Activated CD4-positive, alpha-beta T cell treated with anti-CD3 and anti-CD28 coated beads for 36 hours (primary cell): ENCODE measurements at regions of chr6 and their contacts with region 1.

Region 1: DNA sequence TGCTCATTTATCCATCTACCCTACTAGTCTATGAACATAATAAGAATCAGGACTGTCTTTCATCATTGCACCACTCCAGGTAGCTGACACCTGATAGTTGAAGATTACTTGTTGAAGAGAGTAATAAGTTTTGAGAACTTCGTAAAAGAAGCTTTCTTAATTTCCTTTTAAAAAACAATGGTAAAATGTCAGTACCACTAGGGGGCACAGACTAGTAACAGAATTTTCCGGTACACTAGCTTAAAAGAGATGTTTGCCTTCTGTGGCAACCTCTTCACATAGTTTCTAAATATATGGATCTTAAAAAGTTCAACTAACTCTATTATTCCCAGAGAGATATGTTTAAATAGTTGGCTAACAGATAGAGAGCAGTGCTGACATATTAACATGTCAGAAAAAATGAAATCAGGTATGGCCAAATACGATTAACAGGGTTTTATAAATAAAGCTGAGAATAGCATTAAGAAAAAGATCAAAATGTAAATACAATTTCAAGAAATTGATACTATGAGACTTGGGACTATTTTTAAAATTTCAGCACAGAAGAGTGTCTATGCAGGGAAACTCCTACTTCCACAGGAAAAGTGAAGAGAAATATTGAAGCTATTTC is 5.4 kb upstream of the KCNQ5 start:
- DNase-seq: no peak
- ATAC-seq: no peak
- H3K4me3 Mint-ChIP-seq: no peak overlapping the region
- H3K27ac Mint-ChIP-seq: no peak overlapping the region
- H3K4me1 Mint-ChIP-seq: peaks cover 46% of the 10 kb centered on the region
- H3K27me3 Mint-ChIP-seq: peaks cover 9% of the 10 kb centered on the region

Region 2: DNA sequence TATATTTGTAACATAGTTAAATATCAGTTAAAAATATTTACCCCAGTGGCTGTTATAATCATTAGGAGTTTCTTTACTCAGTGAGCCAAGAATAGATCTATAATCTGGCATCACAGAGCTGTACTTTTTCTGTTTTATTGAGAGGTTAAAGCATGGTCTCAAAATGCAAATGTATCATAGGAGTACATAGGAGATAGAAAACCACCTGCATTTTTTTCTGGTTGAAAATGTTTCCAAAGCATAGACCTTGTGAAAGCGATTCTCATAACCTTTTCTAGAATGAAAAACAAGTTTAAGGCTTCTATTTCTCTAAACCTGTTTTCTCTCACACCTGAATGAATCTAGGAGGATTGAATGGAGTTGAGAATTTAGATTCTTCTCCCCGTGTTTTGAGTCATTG is 19.7 kb after region 1 on chr6:
- CTCF ChIA-PET with region 1: interaction called, 16 read pairs
- POLR2A ChIA-PET with region 1: no interaction called
- intact Hi-C with region 1: no loop called
- DNase-seq: no peak
- ATAC-seq: no peak
- H3K4me3 Mint-ChIP-seq: no peak overlapping the region
- H3K27ac Mint-ChIP-seq: no peak overlapping the region
- H3K4me1 Mint-ChIP-seq: no peaks in the 10 kb centered on the region
- H3K27me3 Mint-ChIP-seq: peaks cover 2% of the 10 kb centered on the region

Region 3: DNA sequence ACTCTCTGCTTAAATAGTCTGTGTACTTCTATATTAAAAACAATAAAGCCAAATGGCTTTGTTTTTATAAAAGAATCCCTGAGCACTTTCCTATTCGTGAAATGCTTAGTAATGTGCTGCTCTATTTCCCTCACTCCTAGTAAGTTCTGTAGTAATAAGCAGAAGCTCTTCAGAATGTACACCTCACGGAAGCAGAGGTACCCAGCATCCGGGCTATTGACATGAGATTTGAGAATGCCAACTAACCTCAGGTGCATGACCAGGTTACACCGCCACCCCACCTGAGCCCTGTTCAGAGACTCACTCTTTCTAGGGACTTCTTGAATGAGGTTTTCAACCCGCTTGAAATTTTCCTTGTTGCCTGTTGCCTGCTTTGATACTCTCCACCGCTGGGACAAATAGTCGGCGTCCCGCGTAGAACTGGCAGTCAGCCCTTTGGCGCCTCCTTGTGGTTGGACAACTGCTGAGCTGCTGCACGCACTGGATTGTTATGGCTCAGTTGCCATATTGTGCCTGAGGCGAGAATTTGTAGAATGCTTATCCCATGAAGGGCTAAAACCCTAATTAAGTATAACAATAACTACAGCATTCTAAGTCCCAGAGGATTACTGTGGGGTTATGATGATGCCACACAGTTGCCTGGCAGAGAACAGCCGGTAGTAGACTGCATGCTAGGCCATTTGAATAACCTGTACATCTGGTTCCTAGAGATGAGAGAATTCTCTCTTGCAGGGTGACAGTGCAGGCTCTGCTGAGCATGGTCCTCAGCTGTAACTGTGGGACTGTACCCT is 513.3 kb after region 1 on chr6:
- CTCF ChIA-PET with region 1: interaction called, 36 read pairs
- POLR2A ChIA-PET with region 1: no interaction called
- intact Hi-C with region 1: loop called (anchors 1 kb)
- DNase-seq: peak; percentile 91
- ATAC-seq: peak; percentile 98
- H3K4me3 Mint-ChIP-seq: no peak overlapping the region
- H3K27ac Mint-ChIP-seq: no peak overlapping the region
- H3K4me1 Mint-ChIP-seq: peaks cover 4% of the 10 kb centered on the region
- H3K27me3 Mint-ChIP-seq: peaks cover 10% of the 10 kb centered on the region

Region 4: GRCh38 chr6:73180763-73181619 is 564.5 kb after region 1 on chr6:
- CTCF ChIA-PET with region 1: no interaction called
- POLR2A ChIA-PET with region 1: no interaction called
- intact Hi-C with region 1: loop called in 1 of 2 experiments (anchors 2 kb)
- DNase-seq: no peak
- ATAC-seq: peak; percentile 90
- H3K4me3 Mint-ChIP-seq: no peak overlapping the region
- H3K27ac Mint-ChIP-seq: no peak overlapping the region
- H3K4me1 Mint-ChIP-seq: no peaks in the 10 kb centered on the region
- H3K27me3 Mint-ChIP-seq: no peaks in the 10 kb centered on the region

Region 5: GRCh38 chr6:73710470-73710869 is 1094.0 kb after region 1 on chr6:
- CTCF ChIA-PET with region 1: no interaction called
- POLR2A ChIA-PET with region 1: no interaction called
- intact Hi-C with region 1: no loop called
- DNase-seq: no peak
- ATAC-seq: no peak
- H3K4me3 Mint-ChIP-seq: no peak overlapping the region
- H3K27ac Mint-ChIP-seq: no peak overlapping the region
- H3K4me1 Mint-ChIP-seq: peaks cover 24% of the 10 kb centered on the region
- H3K27me3 Mint-ChIP-seq: no peaks in the 10 kb centered on the region